Activated CD4-positive, alpha-beta memory T cell treated with anti-CD3 and anti-CD28 coated beads for 36 hours (primary cell): ENCODE measurements at regions of chr9 and their contacts with region 1.

Region 1: GRCh38 chr9:121545875-121546423 is 46.3 kb upstream of the GGTA1 start:
- DNase-seq: peak; percentile 79
- H3K4me3 Mint-ChIP-seq: no peak overlapping the region
- H3K27ac Mint-ChIP-seq: no peak overlapping the region
- H3K4me1 Mint-ChIP-seq: peaks cover under 1% of the 10 kb centered on the region
- H3K27me3 Mint-ChIP-seq: peaks cover 18% of the 10 kb centered on the region

Region 2: GRCh38 chr9:121278535-121279261 is 267.3 kb before region 1 on chr9:
- CTCF ChIA-PET with region 1: no interaction called
- POLR2A ChIA-PET with region 1: no interaction called
- intact Hi-C with region 1: no loop called
- DNase-seq: peak; percentile 60
- H3K4me3 Mint-ChIP-seq: no peak overlapping the region
- H3K27ac Mint-ChIP-seq: no peak overlapping the region
- H3K4me1 Mint-ChIP-seq: peaks cover 5% of the 10 kb centered on the region
- H3K27me3 Mint-ChIP-seq: no peaks in the 10 kb centered on the region

Region 3: GRCh38 chr9:121556580-121556979 is 10.6 kb after region 1 on chr9:
- CTCF ChIA-PET with region 1: interaction called, 13 read pairs
- POLR2A ChIA-PET with region 1: no interaction called
- intact Hi-C with region 1: no loop called
- DNase-seq: no peak
- H3K4me3 Mint-ChIP-seq: no peak overlapping the region
- H3K27ac Mint-ChIP-seq: no peak overlapping the region
- H3K4me1 Mint-ChIP-seq: no peaks in the 10 kb centered on the region
- H3K27me3 Mint-ChIP-seq: peaks cover 5% of the 10 kb centered on the region

Region 4: DNA sequence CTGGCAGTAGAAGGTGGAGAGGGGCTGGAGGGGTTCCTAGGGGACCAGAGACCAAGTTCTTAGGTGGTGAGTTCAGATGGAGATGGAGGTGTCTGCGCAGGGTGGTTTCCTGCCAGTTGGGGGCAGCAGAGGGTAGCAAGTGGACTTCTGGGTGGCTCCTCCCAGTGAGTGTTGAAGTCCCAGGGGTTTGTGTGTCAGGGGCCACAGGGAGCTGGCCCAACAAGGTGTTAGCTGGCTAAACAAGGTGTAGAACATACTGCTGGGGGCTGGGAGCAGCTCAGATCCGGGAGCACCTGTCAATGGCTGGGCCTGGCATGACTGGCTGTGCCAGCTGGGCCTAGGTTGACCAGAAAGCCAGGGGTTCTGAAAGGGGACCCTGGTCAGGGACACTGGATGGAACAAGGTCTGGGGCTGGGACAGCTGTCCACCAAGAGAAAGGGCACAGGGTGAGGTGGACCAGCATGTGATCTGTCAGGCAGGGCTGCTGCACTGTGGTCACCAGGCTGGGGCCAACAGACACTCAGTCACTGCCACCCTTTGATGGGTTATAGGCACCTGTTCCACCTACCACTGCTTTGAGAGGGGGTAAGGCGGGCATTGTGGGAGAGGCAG is 141.1 kb after region 1 on chr9:
- CTCF ChIA-PET with region 1: interaction called, 17 read pairs
- POLR2A ChIA-PET with region 1: no interaction called
- intact Hi-C with region 1: loop called (anchors 10 kb)
- DNase-seq: peak; percentile 80
- H3K4me3 Mint-ChIP-seq: no peak overlapping the region
- H3K27ac Mint-ChIP-seq: no peak overlapping the region
- H3K4me1 Mint-ChIP-seq: no peaks in the 10 kb centered on the region
- H3K27me3 Mint-ChIP-seq: peaks cover 11% of the 10 kb centered on the region

Region 5: DNA sequence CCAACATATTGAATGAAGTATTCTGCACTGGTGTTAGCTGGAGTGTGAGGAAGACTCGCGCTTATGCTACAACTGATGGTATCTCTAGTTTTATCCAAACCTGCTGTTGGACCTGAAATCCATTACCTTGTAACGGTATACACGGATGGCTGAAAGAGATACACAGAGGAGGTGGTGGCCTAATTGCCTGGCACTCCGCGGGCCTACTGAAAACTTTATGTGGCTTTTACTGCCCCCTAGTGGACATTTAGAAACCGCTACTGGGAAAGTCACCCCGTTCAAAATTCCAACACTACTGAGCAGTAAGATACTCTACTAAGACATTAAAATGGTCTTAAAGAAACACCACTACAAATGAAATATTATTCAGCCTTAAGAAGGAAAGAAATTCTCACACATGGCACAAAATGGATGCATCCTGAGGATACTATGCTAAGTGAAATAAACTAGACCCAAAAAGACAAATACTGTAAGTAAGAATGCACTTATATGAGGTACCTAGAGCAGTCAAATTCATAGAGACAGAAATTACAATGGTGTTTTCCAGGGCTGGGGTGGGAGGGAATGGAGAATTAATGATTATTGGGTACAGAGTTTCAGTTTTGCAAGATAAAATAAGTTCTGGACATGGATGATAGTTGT is 446.7 kb after region 1 on chr9:
- CTCF ChIA-PET with region 1: interaction called, 11 read pairs
- POLR2A ChIA-PET with region 1: no interaction called
- intact Hi-C with region 1: loop called (anchors 2 kb)
- DNase-seq: peak; percentile 47
- H3K4me3 Mint-ChIP-seq: no peak overlapping the region
- H3K27ac Mint-ChIP-seq: no peak overlapping the region
- H3K4me1 Mint-ChIP-seq: no peaks in the 10 kb centered on the region
- H3K27me3 Mint-ChIP-seq: no peaks in the 10 kb centered on the region

Region 6: GRCh38 chr9:121997791-121998190 is 451.8 kb after region 1 on chr9:
- CTCF ChIA-PET with region 1: interaction called, 11 read pairs
- POLR2A ChIA-PET with region 1: no interaction called
- intact Hi-C with region 1: loop called (anchors 2 kb)
- DNase-seq: no peak
- H3K4me3 Mint-ChIP-seq: no peak overlapping the region
- H3K27ac Mint-ChIP-seq: no peak overlapping the region
- H3K4me1 Mint-ChIP-seq: no peaks in the 10 kb centered on the region
- H3K27me3 Mint-ChIP-seq: no peaks in the 10 kb centered on the region